Mammary epithelial cell (primary cell): ENCODE measurements at regions of chr12 and their contacts with region 1.

Region 1: DNA sequence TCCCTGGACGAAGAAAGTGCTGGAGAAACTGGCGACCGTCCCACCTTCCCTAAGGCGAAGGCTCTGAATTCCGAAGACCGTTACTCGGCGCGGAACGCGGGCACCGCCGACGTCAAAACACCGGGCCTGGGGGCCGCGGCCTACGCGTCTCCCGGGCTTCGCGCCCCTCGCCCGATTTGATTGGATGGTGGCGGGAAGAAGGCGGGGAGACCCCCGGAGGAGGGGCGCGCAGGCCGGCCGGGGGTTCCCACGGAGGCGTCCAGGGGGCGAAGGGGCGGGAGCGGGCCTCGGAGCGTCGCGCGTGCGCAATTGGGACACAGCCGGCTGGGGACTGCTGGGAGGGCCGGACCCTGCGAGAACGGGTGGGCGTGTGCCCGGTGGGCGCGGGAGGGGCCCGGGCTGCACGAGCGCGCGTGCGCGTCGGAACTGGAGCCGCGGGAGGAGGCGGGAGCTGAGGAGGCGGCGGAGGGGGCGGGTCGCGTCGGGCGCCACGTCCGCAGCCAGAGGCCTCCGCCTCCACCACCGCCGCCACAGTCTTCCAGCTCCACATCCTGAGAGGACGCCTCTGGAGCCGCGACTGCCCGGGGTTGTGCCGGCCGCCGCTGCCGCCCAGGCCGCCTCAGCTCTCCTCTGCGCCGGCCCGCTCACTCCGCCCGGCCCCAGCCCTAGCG is at the start of gene TMEM263:
- DNase-seq: peak; percentile 88
- H3K4me3 ChIP-seq: peak within 1 kb of the TSS; percentile 85 to 99 (median 88)
- H3K27ac ChIP-seq: peak within 1 kb of the TSS; percentile 87
- H3K4me1 ChIP-seq: peaks cover 15% of the 10 kb centered on the region
- H3K27me3 ChIP-seq: no peaks in the 10 kb centered on the region
- CTCF ChIP-seq: peak in 1 of 2 donors; percentile 15
- total RNA-seq, gene TMEM263: 48.7 to 51.3 TPM

Region 2: DNA sequence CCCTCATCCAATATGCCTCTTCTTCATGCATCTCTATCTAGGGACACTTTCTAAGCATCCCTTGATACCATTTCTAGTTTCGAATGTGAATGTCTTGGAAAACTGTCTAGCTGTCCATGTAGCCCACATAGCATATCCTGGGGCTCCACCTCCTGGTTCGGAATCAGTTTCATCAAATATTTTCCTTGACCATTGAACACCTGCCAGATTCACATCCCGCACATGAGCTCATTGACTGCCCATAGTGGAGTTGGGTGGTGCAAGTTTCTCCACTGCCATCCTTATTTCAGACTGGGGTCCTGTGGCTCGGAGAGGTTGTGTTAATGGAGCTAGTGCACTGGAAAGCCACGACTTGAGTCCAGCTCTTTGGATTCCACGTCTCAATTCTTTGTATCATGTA is 58.4 kb before region 1 on chr12:
- CTCF ChIA-PET with region 1: no interaction called
- dilution Hi-C with region 1: no loop called
- in situ Hi-C with region 1: no loop called
- intact Hi-C with region 1: no loop called
- DNase-seq: no peak
- H3K4me3 ChIP-seq: no peak overlapping the region
- H3K27ac ChIP-seq: no peak overlapping the region
- H3K4me1 ChIP-seq: peaks cover 5% of the 10 kb centered on the region
- H3K27me3 ChIP-seq: peaks cover 2% of the 10 kb centered on the region
- CTCF ChIP-seq: peak in 1 of 2 donors; percentile 9

Region 3: DNA sequence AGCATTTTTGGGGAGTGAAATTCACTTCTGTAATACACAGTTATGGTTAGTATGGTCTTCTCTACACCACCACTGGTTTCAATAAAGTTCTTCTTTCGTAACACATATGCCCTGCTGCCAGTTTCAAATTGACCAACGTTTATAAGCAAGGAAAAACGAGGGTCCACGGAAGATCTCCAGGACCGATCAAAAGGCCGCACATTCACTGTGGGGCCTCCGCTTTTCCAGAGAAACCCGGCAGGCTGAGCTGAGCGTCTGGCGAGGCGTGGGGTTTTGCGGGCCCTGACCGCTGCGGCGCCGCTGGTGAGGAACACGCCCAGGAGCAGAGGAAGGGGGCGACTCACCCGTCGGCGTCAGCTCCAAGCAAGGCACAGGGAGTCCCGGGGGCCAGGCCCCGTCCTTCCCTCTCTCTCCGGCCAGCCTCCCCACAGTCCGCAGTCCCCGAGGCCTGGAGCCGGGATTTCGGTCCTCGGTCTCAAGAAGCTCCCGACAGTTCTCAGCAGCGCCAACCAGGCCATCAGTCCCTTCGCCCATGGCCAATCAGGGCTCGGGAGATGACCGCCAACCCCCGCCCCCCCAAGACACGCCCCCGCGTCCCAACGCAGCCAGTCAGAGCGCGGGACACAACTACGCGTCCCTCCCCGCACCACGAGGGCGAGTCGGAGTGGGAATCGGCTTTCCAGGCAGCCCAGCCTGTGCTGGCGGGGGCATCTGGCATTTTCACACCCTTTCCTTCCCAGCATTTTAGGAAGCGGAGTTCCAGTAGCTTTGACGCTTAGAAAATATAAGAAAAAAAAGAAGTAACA is 31.3 kb after region 1 on chr12 and contains the start of gene MTERF2:
- CTCF ChIA-PET with region 1: no interaction called
- dilution Hi-C with region 1: no loop called
- in situ Hi-C with region 1: no loop called
- intact Hi-C with region 1: loop called (anchors 2 kb)
- DNase-seq: peak; percentile 94
- H3K4me3 ChIP-seq: peak within 1 kb of the TSS; percentile 49 to 81 (median 61)
- H3K27ac ChIP-seq: peak within 1 kb of the TSS; percentile 69
- H3K4me1 ChIP-seq: peaks cover 5% of the 10 kb centered on the region
- H3K27me3 ChIP-seq: no peaks in the 10 kb centered on the region
- CTCF ChIP-seq: peak in 1 of 2 donors; percentile 0
- total RNA-seq, gene MTERF2: 7.0 to 8.0 TPM

Region 4: GRCh38 chr12:106999446-106999845 is 43.9 kb after region 1 on chr12:
- CTCF ChIA-PET with region 1: no interaction called
- dilution Hi-C with region 1: no loop called
- in situ Hi-C with region 1: no loop called
- intact Hi-C with region 1: loop called (anchors 1 kb)
- DNase-seq: peak; percentile 71
- H3K4me3 ChIP-seq: no peak overlapping the region
- H3K27ac ChIP-seq: no peak overlapping the region
- H3K4me1 ChIP-seq: peaks cover 7% of the 10 kb centered on the region
- H3K27me3 ChIP-seq: no peaks in the 10 kb centered on the region
- CTCF ChIP-seq: no peak